Uterus (tissue), 4 donors: ENCODE measurements at regions of chr2 and their contacts with region 1.

Region 1: GRCh38 chr2:218292048-218293014 is at the start of gene TMBIM1:
- DNase-seq: peak; percentile 75 to 86
- H3K4me3 ChIP-seq: peak within 1 kb of the TSS; percentile 84 to 97
- H3K27ac ChIP-seq: peak within 1 kb of the TSS; percentile 98 to 100
- H3K4me1 ChIP-seq: peaks cover 5 to 24% of the 10 kb centered on the region in 2 donors
- H3K27me3 ChIP-seq: no peaks in the 10 kb centered on the region
- CTCF ChIP-seq: peak; percentile 66 to 96 (median 94)
- POLR2A ChIP-seq: peak; percentile 88
- total RNA-seq, gene TMBIM1: 112 to 166 (median 120) TPM

Region 2: DNA sequence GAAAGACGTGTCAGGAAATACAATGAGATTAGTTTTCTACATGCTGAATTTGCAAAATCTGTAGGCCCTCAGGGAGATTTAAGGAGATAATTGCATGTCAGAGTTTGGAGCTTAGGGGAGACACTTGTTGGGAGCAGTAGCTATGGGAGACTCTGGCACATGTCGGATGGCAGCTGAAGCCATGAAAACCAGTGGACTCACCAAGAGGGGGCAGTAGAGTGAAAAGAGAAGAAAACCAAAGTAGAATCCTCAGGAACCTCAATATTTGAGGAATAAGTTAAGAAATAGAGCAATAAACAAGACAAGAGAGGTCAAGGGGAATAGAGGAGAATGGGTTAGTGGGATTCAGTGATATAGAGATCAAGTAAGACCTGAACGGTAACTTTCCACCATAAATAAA is 198.5 kb before region 1 on chr2:
- intact Hi-C with region 1: no loop called
- DNase-seq: no peak
- H3K4me3 ChIP-seq: no peak overlapping the region
- H3K27ac ChIP-seq: no peak overlapping the region
- H3K4me1 ChIP-seq: no peaks in the 10 kb centered on the region
- H3K27me3 ChIP-seq: no peaks in the 10 kb centered on the region
- CTCF ChIP-seq: no peak
- POLR2A ChIP-seq: no peak

Region 3: DNA sequence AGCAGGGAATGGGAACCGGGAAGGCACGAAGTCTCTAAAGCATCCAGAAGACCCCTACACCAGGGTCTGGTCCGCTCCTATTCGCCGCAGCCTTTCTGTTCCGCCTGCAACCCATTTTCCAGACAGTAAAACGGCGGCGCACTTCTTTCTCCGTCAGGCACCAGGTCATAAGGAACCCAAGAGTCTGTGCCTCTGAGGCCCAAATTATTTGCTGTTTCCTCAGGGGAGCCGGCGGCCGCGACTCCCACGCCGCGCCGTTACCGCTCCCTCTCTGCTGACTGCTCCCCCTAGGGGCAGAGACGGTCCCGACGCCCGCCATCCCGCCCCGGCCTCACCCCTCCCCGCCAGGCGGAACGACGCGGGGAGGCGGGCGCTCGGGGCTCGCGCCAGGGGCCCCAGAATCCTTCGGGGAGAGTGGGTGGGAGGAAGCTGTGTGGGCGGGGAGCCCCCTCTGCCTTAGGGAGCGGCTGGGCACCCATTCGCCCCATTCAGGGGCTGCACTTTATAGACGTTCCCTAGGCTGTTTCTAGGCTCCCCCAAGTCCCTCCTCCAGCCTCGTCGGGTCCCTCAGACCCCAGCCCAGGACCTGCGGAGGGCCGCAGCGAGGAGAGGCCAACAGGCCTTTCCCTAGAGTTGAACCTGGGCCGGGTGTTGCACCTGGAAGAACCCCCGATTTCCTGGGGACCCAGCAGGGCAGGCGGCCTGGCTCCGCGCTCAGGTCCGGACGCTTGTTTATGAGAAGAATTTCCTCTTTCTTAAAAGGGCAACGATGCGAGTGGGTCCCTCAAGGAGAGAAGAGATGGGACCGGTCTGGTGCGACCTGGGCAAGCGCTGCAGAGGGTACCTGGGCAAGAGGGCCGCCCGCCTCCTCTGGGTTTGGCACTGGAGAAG is 103.7 kb after region 1 on chr2:
- intact Hi-C with region 1: loop called (anchors 10 kb)
- DNase-seq: peak; percentile 95 to 97
- H3K4me3 ChIP-seq: peak overlapping the region; percentile 95
- H3K27ac ChIP-seq: peak overlapping the region; percentile 99
- H3K4me1 ChIP-seq: peaks cover 0 to 5% of the 10 kb centered on the region in 2 donors
- H3K27me3 ChIP-seq: no peaks in the 10 kb centered on the region
- CTCF ChIP-seq: peak; percentile 96 to 98 (median 97)
- POLR2A ChIP-seq: peak in 1 of 2 donors; percentile 41

Region 4: GRCh38 chr2:218814540-218815243 is 522.4 kb after region 1 on chr2:
- intact Hi-C with region 1: no loop called
- DNase-seq: no peak
- H3K4me3 ChIP-seq: no peak overlapping the region
- H3K27ac ChIP-seq: no peak overlapping the region
- H3K4me1 ChIP-seq: no peaks in the 10 kb centered on the region
- H3K27me3 ChIP-seq: no peaks in the 10 kb centered on the region
- CTCF ChIP-seq: no peak
- POLR2A ChIP-seq: no peak